A549 (cell line): ENCODE measurements at regions of chr1 and their contacts with region 1.

Region 1: DNA sequence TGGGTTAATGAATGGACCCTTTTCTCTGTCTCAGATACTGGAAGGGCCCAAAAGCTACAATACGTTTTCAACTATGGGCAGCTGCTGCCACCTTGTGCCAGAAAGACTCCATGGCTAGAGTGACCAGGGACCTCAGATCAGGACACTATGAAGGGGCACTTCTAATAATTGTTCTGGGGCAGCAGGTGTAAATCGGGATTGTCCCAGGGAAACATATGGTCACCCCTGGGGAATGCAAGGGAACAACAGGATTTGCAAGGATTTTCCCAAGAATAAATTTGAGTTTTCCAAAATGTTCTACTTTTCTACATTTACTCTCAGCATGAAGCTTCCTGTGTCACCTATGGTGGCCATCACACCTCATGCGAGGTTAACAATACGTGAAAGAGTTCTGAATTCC is 12.0 kb upstream of the FCAMR start:
- DNase-seq: peak; percentile 57 to 73
- ATAC-seq: peak; percentile 96 to 97
- H3K4me3 ChIP-seq: no peak overlapping the region
- H3K27ac ChIP-seq: no peak overlapping the region
- H3K4me1 ChIP-seq: no peaks in the 10 kb centered on the region; the same call in 2 of the 3 replicates
- CTCF ChIP-seq: peak; percentile 92
- EP300 ChIP-seq: no peak
- POLR2A ChIP-seq: no peak
- RAD21 ChIP-seq: peak; percentile 92

Region 2: GRCh38 chr1:206489980-206490770 is 492.0 kb before region 1 on chr1:
- CTCF ChIA-PET with region 1: interaction called, 24 read pairs
- POLR2A ChIA-PET with region 1: no interaction called
- DNase-seq: peak; percentile 71 to 93
- ATAC-seq: peak; percentile 90 to 97
- H3K4me3 ChIP-seq: no peak overlapping the region
- H3K27ac ChIP-seq: no peak overlapping the region
- H3K4me1 ChIP-seq: no peaks in the 10 kb centered on the region
- CTCF ChIP-seq: peak; percentile 89
- EP300 ChIP-seq: no peak
- POLR2A ChIP-seq: no peak
- RAD21 ChIP-seq: peak; percentile 84 to 93

Region 3: DNA sequence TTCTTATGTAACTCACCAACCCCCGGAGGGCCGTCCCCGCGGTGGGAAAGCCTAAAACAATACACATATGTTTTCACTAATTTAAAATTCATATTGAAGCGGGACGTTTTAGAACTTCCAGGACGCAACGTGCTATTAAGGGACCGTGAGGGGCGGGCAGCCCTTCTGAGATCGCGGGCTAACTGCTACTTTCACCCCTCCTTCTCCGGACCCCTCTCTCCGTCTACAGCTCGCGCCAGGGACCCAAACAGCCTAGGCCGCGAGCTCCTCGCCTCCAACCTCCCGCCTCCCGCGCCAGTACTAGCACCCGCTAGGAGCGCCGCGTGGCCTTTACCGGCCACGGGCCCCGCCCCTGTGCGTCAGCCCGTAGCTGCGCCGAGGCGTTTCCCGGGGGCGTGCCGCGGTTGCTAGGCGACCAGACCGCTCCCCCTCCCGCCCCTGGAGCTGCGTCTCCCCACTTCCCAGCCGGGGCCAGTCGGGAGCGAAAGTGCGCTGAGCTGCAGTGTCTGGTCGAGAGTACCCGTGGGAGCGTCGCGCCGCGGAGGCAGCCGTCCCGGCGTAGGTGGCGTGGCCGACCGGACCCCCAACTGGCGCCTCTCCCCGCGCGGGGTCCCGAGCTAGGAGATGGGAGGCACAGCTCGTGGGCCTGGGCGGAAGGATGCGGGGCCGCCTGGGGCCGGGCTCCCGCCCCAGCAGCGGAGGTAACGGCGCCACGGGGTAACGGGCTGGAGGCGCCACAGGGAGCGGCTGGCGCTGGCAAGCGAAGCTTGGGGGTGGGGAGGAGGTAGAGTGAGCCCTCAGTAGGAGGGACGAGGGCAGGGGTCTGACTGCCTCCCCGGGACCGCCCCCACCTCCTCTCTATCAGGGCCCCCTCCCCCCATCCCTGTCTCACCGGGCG is 346.9 kb before region 1 on chr1 and contains the start of gene DYRK3:
- CTCF ChIA-PET with region 1: interaction called, 34 read pairs
- POLR2A ChIA-PET with region 1: interaction called, 9 read pairs
- DNase-seq: peak; percentile 87 to 93
- ATAC-seq: peak; percentile 91 to 95
- H3K4me3 ChIP-seq: peak within 1 kb of the TSS; percentile 91
- H3K27ac ChIP-seq: peak within 1 kb of the TSS; percentile 88 to 89
- H3K4me1 ChIP-seq: peaks cover 32% of the 10 kb centered on the region; the same call in 2 of the 3 replicates
- CTCF ChIP-seq: no peak
- EP300 ChIP-seq: no peak
- POLR2A ChIP-seq: peak; percentile 91
- RAD21 ChIP-seq: no peak; a peak in 1 of 5 replicates
- polyA plus RNA-seq, gene DYRK3: 7.3 and 9.3 TPM in 2 replicates

Region 4: GRCh38 chr1:206808615-206809014 is 173.6 kb before region 1 on chr1:
- CTCF ChIA-PET with region 1: interaction called, 12 read pairs
- POLR2A ChIA-PET with region 1: no interaction called
- DNase-seq: peak in 1 of 2 experiments; percentile 30
- ATAC-seq: peak in 1 of 2 experiments; percentile 84; a peak in 3 of 6 replicates
- H3K4me3 ChIP-seq: no peak overlapping the region
- H3K27ac ChIP-seq: no peak overlapping the region
- H3K4me1 ChIP-seq: no peaks in the 10 kb centered on the region
- CTCF ChIP-seq: no peak; the same call in 2 of the 3 replicates
- EP300 ChIP-seq: no peak
- POLR2A ChIP-seq: no peak
- RAD21 ChIP-seq: peak; percentile 27 to 55; a peak in 2 of 5 replicates

Region 5: DNA sequence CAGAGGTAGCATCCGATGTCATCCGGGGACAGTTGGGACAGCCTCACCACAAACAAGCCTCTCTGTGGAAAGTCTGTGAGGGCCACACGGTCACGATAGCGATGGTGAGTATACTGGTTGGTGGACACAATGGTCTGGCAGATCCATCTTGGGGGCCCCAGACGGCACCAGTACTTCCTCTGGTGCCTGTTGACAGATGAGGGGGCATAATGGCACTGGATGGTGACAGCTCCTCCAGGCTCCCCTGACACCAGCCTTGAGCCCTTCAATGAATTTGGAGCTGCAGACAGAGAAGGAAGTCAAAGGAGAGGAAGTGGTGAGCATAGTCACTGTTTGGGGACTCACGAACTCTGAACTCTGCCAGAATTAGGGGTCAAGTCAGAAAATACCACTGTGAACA is 19.9 kb before region 1 on chr1:
- CTCF ChIA-PET with region 1: interaction called, 90 read pairs
- POLR2A ChIA-PET with region 1: no interaction called
- DNase-seq: no peak
- ATAC-seq: no peak
- H3K4me3 ChIP-seq: no peak overlapping the region
- H3K27ac ChIP-seq: no peak overlapping the region
- H3K4me1 ChIP-seq: no peaks in the 10 kb centered on the region
- CTCF ChIP-seq: no peak
- EP300 ChIP-seq: no peak
- POLR2A ChIP-seq: no peak
- RAD21 ChIP-seq: no peak

Region 6: GRCh38 chr1:207004981-207005830 is 23.0 kb after region 1 on chr1:
- CTCF ChIA-PET with region 1: interaction called, 24 read pairs
- POLR2A ChIA-PET with region 1: no interaction called
- DNase-seq: peak; percentile 77 to 88
- ATAC-seq: peak; percentile 79 to 90; a peak in 5 of 6 replicates
- H3K4me3 ChIP-seq: no peak overlapping the region
- H3K27ac ChIP-seq: peak overlapping the region; percentile 82 to 89
- H3K4me1 ChIP-seq: peaks cover 61% of the 10 kb centered on the region
- CTCF ChIP-seq: peak; percentile 63
- EP300 ChIP-seq: no peak
- POLR2A ChIP-seq: no peak
- RAD21 ChIP-seq: peak; percentile 35 to 54; a peak in 3 of 5 replicates